Dorsolateral prefrontal cortex (tissue), 120 donors: ENCODE measurements at regions of chr17 and their contacts with region 1.

Region 1: DNA sequence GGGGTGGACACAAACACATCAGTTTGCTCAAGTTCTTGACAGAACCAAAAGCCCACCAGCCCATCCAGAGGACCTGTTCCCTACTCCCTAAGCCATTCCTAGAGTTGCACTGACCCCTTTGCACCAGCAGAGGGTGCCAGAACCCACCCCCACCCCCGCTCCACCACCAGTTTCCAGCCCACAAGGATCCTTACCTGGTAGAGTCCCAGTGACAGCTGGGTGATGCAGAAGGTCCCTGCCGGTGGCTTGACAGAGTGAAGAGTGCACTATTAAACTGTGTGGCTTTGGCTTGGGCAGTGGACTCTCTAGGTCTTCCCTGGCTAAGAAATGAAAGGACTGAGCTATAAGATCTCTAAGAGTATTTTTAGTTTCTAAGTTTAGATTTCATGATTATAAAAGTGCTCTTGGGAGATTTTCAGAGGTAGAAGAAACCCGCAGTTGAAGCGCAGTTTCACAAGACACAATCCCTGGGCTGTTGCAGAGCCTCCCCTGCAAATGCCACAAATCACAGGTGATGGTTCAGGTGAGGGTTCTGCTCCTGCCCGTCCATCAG is 73.3 kb upstream of the MTMR4 start:
- DNase-seq: peak in 9 of 10 donors; percentile 21 to 62 (median 45)
- H3K4me3 ChIP-seq: peak overlapping the region in 1 of 59 donors; percentile 17
- H3K27ac ChIP-seq: peak overlapping the region in 32 of 59 donors; percentile 6 to 79 (median 52)
- H3K27me3 ChIP-seq: no peaks in the 10 kb centered on the region
- CTCF ChIP-seq: peak; percentile 63 to 96 (median 88)

Region 2: DNA sequence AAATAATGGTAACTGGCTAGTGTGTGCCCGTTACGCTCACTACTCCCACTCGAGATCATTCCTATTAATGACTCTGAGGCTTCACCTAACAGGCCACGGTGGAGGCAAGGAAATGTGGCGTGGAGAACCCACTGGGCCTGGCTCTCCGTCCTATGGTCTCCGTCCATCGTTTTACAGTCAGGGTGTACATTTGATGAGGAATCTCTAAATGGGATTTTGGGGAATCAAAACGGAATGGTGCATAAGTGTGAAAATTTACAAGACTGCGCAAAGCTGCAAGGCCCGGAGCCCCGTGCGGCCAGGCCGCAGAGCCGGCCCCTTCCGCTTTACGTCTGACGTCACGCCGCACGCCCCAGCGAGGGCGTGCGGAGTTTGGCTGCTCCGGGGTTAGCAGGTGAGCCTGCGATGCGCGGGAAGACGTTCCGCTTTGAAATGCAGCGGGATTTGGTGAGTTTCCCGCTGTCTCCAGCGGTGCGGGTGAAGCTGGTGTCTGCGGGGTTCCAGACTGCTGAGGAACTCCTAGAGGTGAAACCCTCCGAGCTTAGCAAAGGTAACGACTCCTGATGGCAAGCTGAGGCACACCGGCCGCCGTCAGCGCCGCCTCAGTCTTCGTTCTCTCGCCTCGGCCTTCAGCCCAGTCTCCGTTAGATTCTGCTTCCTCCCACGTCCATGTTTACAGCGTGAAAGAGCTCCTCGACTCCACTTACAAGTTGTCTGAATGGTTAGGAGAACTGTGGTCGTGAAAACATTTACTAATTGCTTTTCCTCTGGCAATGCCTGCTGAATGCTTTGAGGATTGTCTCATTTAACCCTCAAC is 104.7 kb after region 1 on chr17 and contains the start of gene RAD51C:
- intact Hi-C with region 1: loop called in 1 of 2 experiments (anchors 10 kb)
- DNase-seq: peak; percentile 67 to 91 (median 84)
- H3K4me3 ChIP-seq: peak within 1 kb of the TSS; percentile 43 to 98 (median 82)
- H3K27ac ChIP-seq: peak within 1 kb of the TSS; percentile 47 to 96 (median 88)
- H3K27me3 ChIP-seq: no peaks in the 10 kb centered on the region
- CTCF ChIP-seq: peak in 26 of 56 donors; percentile 9 to 51 (median 24)
- total RNA-seq, gene RAD51C: 28.3 to 69.2 (median 44.4) TPM

Region 3: GRCh38 chr17:58706336-58707140 is 118.8 kb after region 1 on chr17:
- intact Hi-C with region 1: no loop called
- DNase-seq: no peak
- H3K4me3 ChIP-seq: no peak overlapping the region
- H3K27ac ChIP-seq: no peak overlapping the region
- H3K27me3 ChIP-seq: no peaks in the 10 kb centered on the region
- CTCF ChIP-seq: no peak